ENCODE measurements at regions of chr13 and their contacts with region 1.

Region 1: DNA sequence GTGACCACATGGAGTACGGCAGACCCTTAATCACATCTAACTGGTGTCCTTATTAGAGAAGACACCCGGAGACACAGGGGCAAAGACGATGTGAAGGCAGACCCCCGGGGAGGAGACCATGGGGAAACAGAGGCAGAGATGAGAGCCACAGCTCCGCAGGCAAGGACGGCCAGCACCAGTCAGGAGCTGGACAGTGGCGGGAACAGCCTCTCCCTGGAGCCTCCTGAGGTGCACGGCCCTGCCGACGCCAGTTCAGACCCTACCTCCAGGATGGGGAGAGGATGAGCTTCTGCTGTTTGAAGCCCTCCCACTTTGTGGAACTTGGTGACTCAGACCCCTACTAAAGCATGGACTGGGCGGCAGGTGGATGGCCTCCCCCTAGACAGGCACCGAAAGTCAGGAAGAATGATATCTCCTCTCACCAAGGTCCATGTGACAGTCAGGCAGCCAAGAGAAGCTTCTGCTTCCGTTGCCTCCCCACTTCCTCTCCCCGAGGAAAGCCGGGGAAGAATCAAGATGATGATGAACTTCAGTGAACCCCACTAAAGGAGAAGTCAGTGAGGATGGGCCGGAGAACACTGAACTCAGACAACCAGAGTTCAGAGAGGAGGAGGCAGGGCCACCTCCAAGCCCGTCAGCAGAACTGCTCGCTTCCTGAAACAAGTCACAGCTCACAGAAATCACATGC is 25.4 kb downstream of the RAB20 start:
- DNase-seq: peak; percentile 58
- ATAC-seq: peak; percentile 43
- H3K4me3 ChIP-seq: no peak overlapping the region
- H3K4me3 Mint-ChIP-seq: peak overlapping the region; percentile 56
- H3K27ac ChIP-seq: no peak overlapping the region
- H3K27ac Mint-ChIP-seq: peak overlapping the region; percentile 42
- H3K4me1 ChIP-seq: peaks cover 18 to 20% of the 10 kb centered on the region in 2 donors
- H3K4me1 Mint-ChIP-seq: peaks cover 31% of the 10 kb centered on the region
- H3K27me3 ChIP-seq: no peaks in the 10 kb centered on the region
- H3K27me3 Mint-ChIP-seq: no peaks in the 10 kb centered on the region
- CTCF ChIP-seq: no peak

Region 2: DNA sequence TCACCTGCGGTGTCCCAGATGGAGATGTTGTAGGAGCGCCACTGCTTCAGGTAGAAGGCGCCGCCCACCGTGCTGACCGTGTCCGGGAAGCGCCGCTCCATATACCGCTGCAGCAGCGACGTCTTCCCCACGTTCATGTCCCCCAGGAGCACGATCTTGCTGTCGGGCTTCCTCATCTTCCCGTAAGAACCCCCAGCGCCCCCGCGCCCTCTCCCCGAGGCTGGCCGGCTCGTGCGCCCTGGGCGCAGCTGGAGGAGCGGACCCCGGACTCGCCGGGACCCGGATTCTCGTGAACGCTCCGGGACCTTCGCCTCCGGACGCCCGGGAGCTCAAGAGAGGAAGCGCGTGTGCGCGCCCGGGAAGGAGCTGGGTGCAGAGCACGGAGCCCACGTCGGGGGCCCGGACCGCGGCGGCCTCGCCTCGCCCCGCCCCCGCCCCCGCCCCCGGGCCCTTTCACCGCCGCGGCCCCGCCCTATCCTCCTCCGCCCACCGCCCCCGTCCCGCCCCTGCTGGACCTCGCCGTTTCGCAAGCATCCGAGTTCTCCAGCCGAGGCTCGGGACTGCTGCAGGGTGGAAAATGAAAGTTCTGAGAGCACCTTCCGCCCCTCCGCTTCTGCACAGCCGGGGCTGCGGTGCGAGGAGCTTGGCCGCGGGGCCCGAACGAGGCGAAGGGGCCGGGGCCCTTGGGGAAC is 25.3 kb after region 1 on chr13 and contains the start of gene RAB20:
- CTCF ChIA-PET with region 1: no interaction called
- POLR2A ChIA-PET with region 1: interaction called, 12 read pairs
- intact Hi-C with region 1: no loop called
- DNase-seq: peak; percentile 74
- ATAC-seq: peak; percentile 81
- H3K4me3 ChIP-seq: peak within 1 kb of the TSS; percentile 59 to 92 (median 70)
- H3K4me3 Mint-ChIP-seq: peak within 1 kb of the TSS; percentile 91
- H3K27ac ChIP-seq: peak within 1 kb of the TSS; percentile 12 to 51
- H3K27ac Mint-ChIP-seq: peak within 1 kb of the TSS; percentile 79
- H3K4me1 ChIP-seq: peaks cover 13 to 15% of the 10 kb centered on the region in 2 donors
- H3K4me1 Mint-ChIP-seq: peaks cover 34% of the 10 kb centered on the region
- H3K27me3 ChIP-seq: peaks cover 0 to 5% (median 0%) of the 10 kb centered on the region in 4 experiments
- H3K27me3 Mint-ChIP-seq: peaks cover 10% of the 10 kb centered on the region
- CTCF ChIP-seq: no peak
- total RNA-seq, gene RAB20: 4.6 and 5.1 TPM in 2 replicates

Region 3: GRCh38 chr13:111115965-111116500 is 579.9 kb after region 1 on chr13:
- CTCF ChIA-PET with region 1: no interaction called
- POLR2A ChIA-PET with region 1: interaction called, 11 read pairs
- intact Hi-C with region 1: no loop called
- DNase-seq: peak; percentile 49
- ATAC-seq: no peak
- H3K4me3 ChIP-seq: peak overlapping the region in 3 of 5 experiments; percentile 30 to 41 (median 36)
- H3K4me3 Mint-ChIP-seq: peak overlapping the region; percentile 87
- H3K27ac ChIP-seq: no peak overlapping the region
- H3K27ac Mint-ChIP-seq: peak overlapping the region; percentile 54
- H3K4me1 ChIP-seq: peaks cover 16 to 17% of the 10 kb centered on the region in 2 donors
- H3K4me1 Mint-ChIP-seq: peaks cover 15% of the 10 kb centered on the region
- H3K27me3 ChIP-seq: peaks cover 3 to 55% (median 41%) of the 10 kb centered on the region in 4 experiments
- H3K27me3 Mint-ChIP-seq: peaks cover 75% of the 10 kb centered on the region
- CTCF ChIP-seq: no peak

Measured in B cell (primary cell).